Naive thymus-derived CD4-positive, alpha-beta T cell (primary cell): ENCODE measurements at regions of chr17 and their contacts with region 1.

Region 1: DNA sequence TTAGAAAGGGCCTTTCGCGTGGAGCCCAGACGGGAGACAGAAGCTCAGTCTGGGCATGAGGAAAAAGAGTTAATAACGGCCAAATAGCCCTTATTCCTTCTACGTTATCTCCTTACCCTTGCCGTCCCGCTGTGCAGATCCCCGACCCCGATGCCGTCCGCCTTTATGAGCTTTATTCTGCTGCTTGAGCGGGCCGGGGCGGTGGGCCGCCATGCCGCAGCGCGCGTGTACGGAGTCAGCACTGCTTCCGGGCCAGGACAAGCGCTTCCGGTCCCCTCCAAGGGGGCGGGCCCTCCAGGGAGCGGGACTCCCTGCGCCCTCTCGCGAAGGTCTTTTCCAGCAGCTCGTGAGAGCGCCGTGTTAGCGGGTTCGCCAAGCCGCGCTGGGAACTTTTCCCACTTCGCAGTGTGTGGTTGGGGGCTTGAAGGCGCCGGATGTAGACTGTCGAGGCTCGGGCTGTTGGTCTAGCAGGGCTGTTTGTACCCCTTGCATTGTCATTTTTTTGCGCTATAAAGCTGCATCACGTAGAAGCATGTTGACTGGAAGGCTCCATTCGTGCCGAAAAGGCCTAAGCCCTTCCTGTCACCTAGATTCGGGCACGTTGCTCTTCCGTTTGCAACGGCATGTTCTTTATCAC is at the start of gene TSR1:
- DNase-seq: peak; percentile 78 to 91 (median 89)
- ATAC-seq: peak; percentile 91
- H3K4me3 ChIP-seq: peak within 1 kb of the TSS; percentile 99
- H3K4me3 Mint-ChIP-seq: peak within 1 kb of the TSS; percentile 97 to 99 (median 98)
- H3K27ac ChIP-seq: peak within 1 kb of the TSS; percentile 92
- H3K27ac Mint-ChIP-seq: peak within 1 kb of the TSS; percentile 88 to 98 (median 95)
- H3K4me1 ChIP-seq: peaks cover 10 to 13% of the 10 kb centered on the region in 2 donors
- H3K4me1 Mint-ChIP-seq: peaks cover 8 to 35% (median 28%) of the 10 kb centered on the region in 7 donors
- H3K27me3 ChIP-seq: no peaks in the 10 kb centered on the region
- H3K27me3 Mint-ChIP-seq: no peaks in the 10 kb centered on the region
- total RNA-seq, gene TSR1: 22.9 to 42.8 (median 30.0) TPM

Region 2: DNA sequence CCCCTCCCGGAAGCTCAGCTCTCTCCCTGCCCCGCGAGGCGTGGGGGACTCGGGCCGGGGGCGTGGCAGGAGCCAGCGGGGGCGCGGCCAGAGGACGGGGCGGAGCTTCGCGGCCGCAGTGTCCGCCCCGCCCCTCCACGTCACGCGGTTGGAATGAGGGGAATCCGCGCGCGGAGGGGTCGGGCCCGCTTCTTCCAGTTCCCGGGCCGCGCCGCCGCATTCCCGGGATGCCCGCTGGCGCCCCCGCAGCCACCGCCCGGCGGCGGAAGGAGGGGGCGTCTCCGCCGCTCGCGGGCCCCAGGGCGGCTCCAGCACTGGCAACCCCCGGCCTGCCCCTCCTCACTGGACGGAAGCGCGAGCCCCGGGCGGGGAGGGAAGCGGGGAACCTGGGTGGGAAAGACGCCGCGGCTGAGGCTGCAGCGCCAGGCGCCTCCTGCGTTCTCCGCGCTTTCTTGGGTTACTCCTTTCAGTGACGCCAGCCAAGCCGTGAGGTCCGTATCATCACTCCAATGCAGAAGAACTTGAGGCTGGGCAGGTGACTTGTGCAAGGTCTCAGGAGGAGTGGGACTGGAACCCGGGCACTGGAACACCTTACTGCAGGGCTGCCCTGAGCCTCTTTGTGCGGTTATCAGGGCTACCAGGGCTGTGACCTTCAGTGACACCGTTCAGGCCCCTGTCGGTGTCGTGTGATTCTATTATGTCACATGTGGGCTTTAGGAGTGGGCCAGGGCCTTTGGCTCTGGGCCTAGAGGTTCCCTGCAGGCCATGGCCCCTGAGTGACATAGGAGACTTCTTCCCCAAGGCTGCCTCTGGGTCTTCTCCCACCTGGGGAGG is 848.1 kb before region 1 on chr17:
- CTCF ChIA-PET with region 1: no interaction called
- POLR2A ChIA-PET with region 1: no interaction called
- intact Hi-C with region 1: loop called in 1 of 2 experiments (anchors 2 kb)
- DNase-seq: peak; percentile 40 to 83 (median 61)
- ATAC-seq: peak; percentile 61
- H3K4me3 ChIP-seq: peak overlapping the region; percentile 65
- H3K4me3 Mint-ChIP-seq: peak overlapping the region; percentile 82 to 95 (median 88)
- H3K27ac ChIP-seq: peak overlapping the region; percentile 78
- H3K27ac Mint-ChIP-seq: peak overlapping the region; percentile 49 to 92 (median 71)
- H3K4me1 ChIP-seq: peaks cover 21 to 47% of the 10 kb centered on the region in 2 donors
- H3K4me1 Mint-ChIP-seq: peaks cover 0 to 58% (median 44%) of the 10 kb centered on the region in 7 donors
- H3K27me3 ChIP-seq: no peaks in the 10 kb centered on the region
- H3K27me3 Mint-ChIP-seq: peaks cover 0 to 4% (median 0%) of the 10 kb centered on the region in 5 donors

Region 3: GRCh38 chr17:2266045-2266864 is 70.1 kb before region 1 on chr17:
- CTCF ChIA-PET with region 1: no interaction called
- POLR2A ChIA-PET with region 1: interaction called, 6 read pairs
- intact Hi-C with region 1: loop called in 1 of 2 experiments (anchors 1 kb)
- DNase-seq: peak; percentile 20 to 96 (median 91)
- ATAC-seq: peak; percentile 92
- H3K4me3 ChIP-seq: peak overlapping the region; percentile 38
- H3K4me3 Mint-ChIP-seq: peak overlapping the region; percentile 69 to 94 (median 82)
- H3K27ac ChIP-seq: peak overlapping the region; percentile 80
- H3K27ac Mint-ChIP-seq: peak overlapping the region; percentile 96 to 100 (median 99)
- H3K4me1 ChIP-seq: peaks cover 65 to 90% of the 10 kb centered on the region in 2 donors
- H3K4me1 Mint-ChIP-seq: peaks cover 38 to 89% (median 83%) of the 10 kb centered on the region in 7 donors
- H3K27me3 ChIP-seq: no peaks in the 10 kb centered on the region
- H3K27me3 Mint-ChIP-seq: no peaks in the 10 kb centered on the region

Region 4: GRCh38 chr17:2354311-2354710 is 18.0 kb after region 1 on chr17:
- CTCF ChIA-PET with region 1: interaction called, 18 read pairs
- POLR2A ChIA-PET with region 1: interaction called, 18 read pairs
- intact Hi-C with region 1: loop called (anchors 1 kb)
- DNase-seq: no peak
- ATAC-seq: no peak
- H3K4me3 ChIP-seq: no peak overlapping the region
- H3K4me3 Mint-ChIP-seq: peak overlapping the region in 7 of 10 donors; percentile 2 to 83 (median 75)
- H3K27ac ChIP-seq: no peak overlapping the region
- H3K27ac Mint-ChIP-seq: peak overlapping the region; percentile 51 to 97 (median 87)
- H3K4me1 ChIP-seq: peaks cover 15 to 19% of the 10 kb centered on the region in 2 donors
- H3K4me1 Mint-ChIP-seq: peaks cover 16 to 23% (median 21%) of the 10 kb centered on the region in 7 donors
- H3K27me3 ChIP-seq: no peaks in the 10 kb centered on the region
- H3K27me3 Mint-ChIP-seq: no peaks in the 10 kb centered on the region

Region 5: GRCh38 chr17:2392252-2393173 is 56.2 kb after region 1 on chr17:
- CTCF ChIA-PET with region 1: no interaction called
- POLR2A ChIA-PET with region 1: interaction called, 9 read pairs
- intact Hi-C with region 1: loop called (anchors 2 kb)
- DNase-seq: peak; percentile 94 to 100 (median 98)
- ATAC-seq: peak; percentile 78
- H3K4me3 ChIP-seq: peak overlapping the region; percentile 89
- H3K4me3 Mint-ChIP-seq: peak overlapping the region; percentile 88 to 97 (median 94)
- H3K27ac ChIP-seq: peak overlapping the region; percentile 100
- H3K27ac Mint-ChIP-seq: peak overlapping the region; percentile 90 to 98 (median 96)
- H3K4me1 ChIP-seq: peaks cover 15 to 52% of the 10 kb centered on the region in 2 donors
- H3K4me1 Mint-ChIP-seq: peaks cover 38 to 70% (median 56%) of the 10 kb centered on the region in 7 donors
- H3K27me3 ChIP-seq: no peaks in the 10 kb centered on the region
- H3K27me3 Mint-ChIP-seq: no peaks in the 10 kb centered on the region